ENCODE measurements at regions of chr11 and their contacts with region 1.

Region 1: DNA sequence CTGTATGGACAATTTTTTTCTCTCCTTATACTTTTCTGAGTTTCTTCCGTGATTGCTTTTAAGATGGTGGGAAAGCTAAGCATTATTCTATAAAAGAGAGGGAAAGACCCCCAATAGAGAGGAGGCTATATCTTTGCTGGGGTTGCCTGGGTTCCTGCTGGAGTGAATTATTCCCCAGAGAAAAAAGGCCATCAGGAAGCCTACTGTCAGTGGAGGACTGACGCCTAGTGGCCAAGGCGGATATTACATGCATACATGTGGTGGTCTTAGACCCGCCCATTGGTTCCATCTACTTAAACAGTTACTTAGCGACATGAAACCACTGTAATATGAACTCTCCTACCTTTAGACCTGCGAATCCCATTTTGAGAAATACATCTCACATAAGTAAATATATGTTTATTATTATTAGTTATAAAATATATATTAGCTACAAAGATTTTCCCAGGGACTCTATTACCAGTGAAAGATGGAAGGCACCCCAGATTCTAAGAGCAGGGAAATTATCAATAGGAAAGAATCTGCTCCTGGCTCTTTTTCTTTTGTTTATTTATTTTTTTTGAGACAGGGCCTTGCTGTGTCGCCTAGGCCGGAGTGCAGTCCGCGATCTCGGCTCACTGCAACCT is 15.7 kb upstream of the PGA3 start:
- DNase-seq: peak; percentile 74
- ATAC-seq: peak; percentile 93
- H3K4me3 ChIP-seq: no peak overlapping the region
- H3K27ac ChIP-seq: no peak overlapping the region
- H3K4me1 ChIP-seq: no peaks in the 10 kb centered on the region
- H3K27me3 ChIP-seq: no peaks in the 10 kb centered on the region
- CTCF ChIP-seq: peak; percentile 88 to 95 (median 93)
- POLR2A ChIP-seq: no peak
- RAD21 ChIP-seq: peak; percentile 95

Region 2: GRCh38 chr11:60913793-60914632 is 273.6 kb before region 1 on chr11 and contains the start of gene TMEM109:
- CTCF ChIA-PET with region 1: interaction called, 3 read pairs
- POLR2A ChIA-PET with region 1: no interaction called
- RAD21 ChIA-PET with region 1: no interaction called
- intact Hi-C with region 1: loop called (anchors 10 kb)
- DNase-seq: peak; percentile 73
- ATAC-seq: peak; percentile 77
- H3K4me3 ChIP-seq: peak within 1 kb of the TSS; percentile 61 to 67
- H3K27ac ChIP-seq: peak within 1 kb of the TSS; percentile 61
- H3K4me1 ChIP-seq: peaks cover 23 to 60% of the 10 kb centered on the region in 2 experiments
- H3K27me3 ChIP-seq: no peaks in the 10 kb centered on the region
- CTCF ChIP-seq: no peak
- POLR2A ChIP-seq: peak; percentile 44
- RAD21 ChIP-seq: no peak
- total RNA-seq, gene TMEM109: 44.4 TPM

Region 3: GRCh38 chr11:60970369-60970774 is 217.2 kb before region 1 on chr11:
- CTCF ChIA-PET with region 1: interaction called, 11 read pairs
- POLR2A ChIA-PET with region 1: no interaction called
- RAD21 ChIA-PET with region 1: no interaction called
- intact Hi-C with region 1: loop called (anchors 2 kb)
- DNase-seq: peak; percentile 16
- ATAC-seq: peak; percentile 99
- H3K4me3 ChIP-seq: no peak overlapping the region
- H3K27ac ChIP-seq: no peak overlapping the region
- H3K4me1 ChIP-seq: no peaks in the 10 kb centered on the region
- H3K27me3 ChIP-seq: no peaks in the 10 kb centered on the region
- CTCF ChIP-seq: peak; percentile 83 to 93 (median 87); a peak in 5 of 6 replicates
- POLR2A ChIP-seq: no peak
- RAD21 ChIP-seq: peak; percentile 80

Region 4: DNA sequence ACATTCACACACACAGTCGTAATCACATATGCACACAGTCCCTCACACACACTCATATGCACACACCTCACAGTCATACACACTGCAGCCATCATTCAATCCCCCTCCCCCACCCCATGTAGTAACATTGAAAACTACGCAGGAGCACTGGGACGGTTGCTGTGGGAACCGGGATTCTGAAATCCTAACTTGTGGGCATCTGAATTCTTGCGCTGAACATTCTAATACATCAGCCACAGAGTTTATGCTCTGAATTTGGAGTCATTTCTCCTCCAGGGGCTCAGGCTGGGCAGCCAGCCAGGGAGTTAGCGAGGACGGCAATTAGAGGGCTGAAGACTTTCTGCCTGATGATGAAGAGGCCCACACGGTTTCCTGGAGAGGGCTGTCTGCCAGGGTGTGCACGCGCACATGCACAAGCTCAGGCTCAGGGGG is 183.4 kb before region 1 on chr11:
- CTCF ChIA-PET with region 1: no interaction called
- POLR2A ChIA-PET with region 1: no interaction called
- RAD21 ChIA-PET with region 1: no interaction called
- intact Hi-C with region 1: no loop called
- DNase-seq: no peak
- ATAC-seq: no peak
- H3K4me3 ChIP-seq: no peak overlapping the region
- H3K27ac ChIP-seq: no peak overlapping the region
- H3K4me1 ChIP-seq: no peaks in the 10 kb centered on the region
- H3K27me3 ChIP-seq: peaks cover 3% of the 10 kb centered on the region; the same call in 1 of the 2 replicates
- CTCF ChIP-seq: no peak
- POLR2A ChIP-seq: no peak
- RAD21 ChIP-seq: no peak

Region 5: DNA sequence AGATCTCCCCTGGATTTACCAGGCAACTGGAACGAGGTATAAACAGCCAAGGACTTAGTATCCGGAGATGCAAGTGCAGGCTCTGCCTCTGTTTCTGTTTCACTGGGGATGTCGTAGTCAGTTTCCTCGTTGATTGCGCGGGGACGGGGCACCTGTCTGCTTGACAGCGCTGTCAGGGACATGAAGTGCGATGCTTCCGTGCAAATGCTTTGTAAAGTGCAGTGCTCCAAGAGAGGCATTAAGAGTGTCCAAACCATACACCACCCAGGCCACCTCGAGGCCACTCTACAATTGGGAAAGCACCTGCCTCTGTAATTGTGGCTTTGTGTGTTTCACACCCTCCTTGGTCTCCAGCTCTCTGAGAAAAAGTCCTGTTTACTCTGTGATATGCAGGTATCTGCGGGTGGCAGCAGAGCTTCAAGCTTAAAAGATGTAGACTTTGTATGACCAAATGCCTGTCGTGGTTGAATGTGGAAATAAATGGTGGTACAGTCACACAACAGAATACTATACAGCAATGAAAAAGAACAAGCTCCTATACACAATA is 103.9 kb before region 1 on chr11:
- CTCF ChIA-PET with region 1: no interaction called
- POLR2A ChIA-PET with region 1: no interaction called
- RAD21 ChIA-PET with region 1: no interaction called
- intact Hi-C with region 1: loop called (anchors 5 kb)
- DNase-seq: no peak
- ATAC-seq: no peak
- H3K4me3 ChIP-seq: no peak overlapping the region
- H3K27ac ChIP-seq: no peak overlapping the region
- H3K4me1 ChIP-seq: no peaks in the 10 kb centered on the region
- H3K27me3 ChIP-seq: no peaks in the 10 kb centered on the region
- CTCF ChIP-seq: no peak
- POLR2A ChIP-seq: no peak
- RAD21 ChIP-seq: peak; percentile 9; the same call in 1 of the 2 replicates

Region 6: GRCh38 chr11:61129639-61130523 is 57.7 kb before region 1 on chr11:
- CTCF ChIA-PET with region 1: interaction called, 3 read pairs
- POLR2A ChIA-PET with region 1: no interaction called
- RAD21 ChIA-PET with region 1: no interaction called
- intact Hi-C with region 1: loop called (anchors 1 kb)
- DNase-seq: peak; percentile 73
- ATAC-seq: peak; percentile 95
- H3K4me3 ChIP-seq: peak overlapping the region in 1 of 2 experiments; percentile 37; a peak in 3 of 4 replicates
- H3K27ac ChIP-seq: peak overlapping the region; percentile 45
- H3K4me1 ChIP-seq: peaks cover 6 to 18% of the 10 kb centered on the region in 2 experiments; a peak in 3 of 4 replicates
- H3K27me3 ChIP-seq: no peaks in the 10 kb centered on the region
- CTCF ChIP-seq: peak; percentile 100
- POLR2A ChIP-seq: no peak
- RAD21 ChIP-seq: peak; percentile 98

Region 7: DNA sequence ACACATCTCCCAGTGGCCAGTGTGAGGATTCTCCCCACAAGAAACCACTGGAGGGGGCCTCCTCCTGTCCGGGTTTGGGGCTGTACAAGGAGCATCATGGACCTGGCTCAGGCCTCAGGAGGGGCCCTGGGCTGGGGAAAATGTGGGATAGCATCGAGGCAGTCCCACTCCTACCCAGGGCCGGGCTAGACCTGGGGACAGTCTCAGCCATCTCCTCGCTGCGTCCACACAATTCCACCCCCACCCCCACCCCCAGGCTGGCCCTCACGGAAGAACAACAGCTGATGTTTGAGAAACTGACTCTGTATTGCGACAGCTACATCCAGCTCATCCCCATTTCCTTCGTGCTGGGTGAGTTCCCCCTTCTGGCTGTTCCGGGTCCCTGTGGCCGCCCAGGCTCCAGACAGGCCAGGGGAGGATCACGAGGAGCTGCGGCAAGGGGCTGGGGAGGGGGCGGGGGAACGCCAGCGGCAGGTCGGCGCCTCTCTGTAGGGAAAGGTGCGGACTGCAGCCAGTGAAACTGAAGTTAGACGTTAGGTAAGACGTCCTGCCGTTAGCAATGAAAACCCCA is 767.3 kb after region 1 on chr11:
- CTCF ChIA-PET with region 1: no interaction called
- POLR2A ChIA-PET with region 1: no interaction called
- RAD21 ChIA-PET with region 1: no interaction called
- intact Hi-C with region 1: no loop called
- DNase-seq: no peak
- ATAC-seq: no peak
- H3K4me3 ChIP-seq: no peak overlapping the region
- H3K27ac ChIP-seq: no peak overlapping the region
- H3K4me1 ChIP-seq: peaks cover 0 to 13% of the 10 kb centered on the region in 2 experiments; a peak in 2 of 4 replicates
- H3K27me3 ChIP-seq: no peaks in the 10 kb centered on the region
- CTCF ChIP-seq: no peak
- POLR2A ChIP-seq: no peak
- RAD21 ChIP-seq: no peak

Measured in HCT116 (cell line).